ENCODE measurements at regions of chr3 and their contacts with region 1.

Region 1: DNA sequence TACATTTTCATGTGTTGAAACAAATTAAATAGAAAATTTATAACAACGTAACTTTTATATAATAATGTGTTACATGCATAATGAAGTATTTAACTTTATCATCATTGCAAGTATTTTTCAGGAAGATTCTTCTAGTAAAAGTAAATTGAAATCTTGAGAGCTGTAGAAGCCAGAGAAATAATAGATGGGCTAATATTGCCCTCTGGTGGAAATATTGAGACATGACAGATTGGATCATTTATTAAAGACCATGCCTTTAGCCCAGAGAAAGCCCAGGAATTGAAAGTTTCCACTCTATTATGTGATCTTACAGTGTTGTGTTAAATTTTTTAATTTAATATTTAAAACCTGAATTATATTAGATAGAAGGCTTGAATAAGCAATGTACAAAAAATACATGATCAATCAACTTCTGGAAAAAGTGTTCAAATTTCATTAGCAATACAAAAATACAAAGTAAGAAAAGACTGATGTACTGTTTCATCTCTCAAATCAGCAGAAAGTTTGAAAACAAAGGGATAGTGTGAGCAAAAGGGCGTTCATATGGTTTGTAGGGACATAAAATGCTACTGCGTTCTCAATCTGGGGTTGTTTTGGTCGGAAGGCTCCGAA is 52.7 kb upstream of the SPTSSB start:
- DNase-seq: peak; percentile 22
- H3K4me3 ChIP-seq: no peak overlapping the region
- H3K27ac ChIP-seq: no peak overlapping the region
- H3K4me1 ChIP-seq: peaks cover 14% of the 10 kb centered on the region
- H3K27me3 ChIP-seq: no peaks in the 10 kb centered on the region
- CTCF ChIP-seq: peak; percentile 49 to 55

Region 2: GRCh38 chr3:160921020-160921635 is 502.9 kb before region 1 on chr3:
- CTCF ChIA-PET with region 1: no interaction called
- dilution Hi-C with region 1: no loop called
- in situ Hi-C with region 1: loop called in 1 of 2 experiments (anchors 25 kb)
- intact Hi-C with region 1: loop called (anchors 2 kb)
- DNase-seq: peak; percentile 8
- H3K4me3 ChIP-seq: no peak overlapping the region
- H3K27ac ChIP-seq: no peak overlapping the region
- H3K4me1 ChIP-seq: no peaks in the 10 kb centered on the region
- H3K27me3 ChIP-seq: no peaks in the 10 kb centered on the region
- CTCF ChIP-seq: peak; percentile 67 to 79

Region 3: GRCh38 chr3:160956806-160957205 is 467.2 kb before region 1 on chr3:
- CTCF ChIA-PET with region 1: no interaction called
- dilution Hi-C with region 1: no loop called
- in situ Hi-C with region 1: loop called in 1 of 2 experiments (anchors 25 kb)
- intact Hi-C with region 1: loop called (anchors 1 kb)
- DNase-seq: peak; percentile 24
- H3K4me3 ChIP-seq: no peak overlapping the region
- H3K27ac ChIP-seq: no peak overlapping the region
- H3K4me1 ChIP-seq: no peaks in the 10 kb centered on the region
- H3K27me3 ChIP-seq: peaks cover 3% of the 10 kb centered on the region
- CTCF ChIP-seq: peak; percentile 43 to 54

Region 4: GRCh38 chr3:161220850-161221753 is 202.9 kb before region 1 on chr3 and contains the start of gene NMD3:
- CTCF ChIA-PET with region 1: no interaction called
- dilution Hi-C with region 1: no loop called
- in situ Hi-C with region 1: no loop called
- intact Hi-C with region 1: loop called (anchors 5 kb)
- DNase-seq: peak; percentile 91
- H3K4me3 ChIP-seq: peak within 1 kb of the TSS; percentile 93 to 97 (median 96)
- H3K27ac ChIP-seq: peak within 1 kb of the TSS; percentile 93
- H3K4me1 ChIP-seq: peaks cover 10% of the 10 kb centered on the region
- H3K27me3 ChIP-seq: no peaks in the 10 kb centered on the region
- CTCF ChIP-seq: no peak
- total RNA-seq, gene NMD3: 74.4 to 112 TPM

Region 5: GRCh38 chr3:161371430-161372326 is 52.3 kb before region 1 on chr3 and contains the start of gene SPTSSB:
- CTCF ChIA-PET with region 1: no interaction called
- dilution Hi-C with region 1: no loop called
- in situ Hi-C with region 1: no loop called
- intact Hi-C with region 1: no loop called
- DNase-seq: peak; percentile 72
- H3K4me3 ChIP-seq: peak within 1 kb of the TSS; percentile 54 to 61 (median 56)
- H3K27ac ChIP-seq: no peak within 1 kb of the TSS
- H3K4me1 ChIP-seq: peaks cover 16% of the 10 kb centered on the region
- H3K27me3 ChIP-seq: no peaks in the 10 kb centered on the region
- CTCF ChIP-seq: peak in 1 of 2 donors; percentile 26
- total RNA-seq, gene SPTSSB: 0.17 TPM in 1 of 2 donors, not detected in the other

Region 6: GRCh38 chr3:161540594-161540993 is 116.6 kb after region 1 on chr3:
- CTCF ChIA-PET with region 1: no interaction called
- dilution Hi-C with region 1: no loop called
- in situ Hi-C with region 1: no loop called
- intact Hi-C with region 1: no loop called
- DNase-seq: no peak
- H3K4me3 ChIP-seq: no peak overlapping the region
- H3K27ac ChIP-seq: no peak overlapping the region
- H3K4me1 ChIP-seq: no peaks in the 10 kb centered on the region
- H3K27me3 ChIP-seq: no peaks in the 10 kb centered on the region
- CTCF ChIP-seq: no peak

Region 7: GRCh38 chr3:161567577-161568361 is 143.8 kb after region 1 on chr3:
- CTCF ChIA-PET with region 1: no interaction called
- dilution Hi-C with region 1: no loop called
- in situ Hi-C with region 1: no loop called
- intact Hi-C with region 1: no loop called
- DNase-seq: no peak
- H3K4me3 ChIP-seq: no peak overlapping the region
- H3K27ac ChIP-seq: no peak overlapping the region
- H3K4me1 ChIP-seq: no peaks in the 10 kb centered on the region
- H3K27me3 ChIP-seq: peaks cover 2% of the 10 kb centered on the region
- CTCF ChIP-seq: no peak

Region 8: DNA sequence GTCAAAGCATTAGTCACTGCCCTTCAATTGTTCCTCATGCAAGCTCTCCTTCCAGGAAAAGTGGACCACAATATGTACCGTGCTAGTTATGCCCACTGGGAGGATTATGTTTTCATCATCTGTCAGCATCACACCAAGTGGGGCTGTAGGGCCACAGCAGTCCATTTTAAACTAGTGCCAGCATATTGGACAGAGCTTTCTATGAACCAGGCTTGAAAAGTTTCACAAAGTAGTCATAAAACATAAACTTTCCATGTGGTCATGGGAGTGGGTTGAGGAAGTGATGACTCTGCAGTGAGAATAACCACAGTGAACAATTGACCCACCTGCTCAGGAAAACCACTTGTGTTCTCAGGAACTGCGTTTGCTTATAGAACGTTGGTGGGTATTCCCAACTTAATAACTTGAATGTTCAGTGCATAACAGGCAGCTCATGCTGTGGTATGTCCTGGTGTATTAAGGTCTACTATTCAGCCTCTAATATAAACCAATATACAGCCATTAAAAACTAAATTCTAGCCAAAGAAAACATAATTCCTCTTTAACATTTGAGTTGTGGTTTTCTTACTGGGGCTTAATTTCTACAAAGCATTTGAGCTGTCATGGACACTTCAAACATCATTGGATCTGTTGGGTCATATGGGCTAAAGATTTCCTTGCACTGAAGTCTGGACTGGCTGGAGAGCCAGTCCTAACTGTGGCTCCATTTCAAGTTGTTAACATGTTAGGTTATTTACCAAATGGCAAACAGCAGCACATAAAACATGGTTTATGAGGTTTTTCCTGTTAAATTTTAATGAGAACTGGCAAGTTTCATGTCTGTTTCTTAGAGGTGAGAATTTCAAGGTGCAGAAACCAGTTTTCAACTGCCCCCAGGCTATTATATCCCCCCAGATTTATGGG is 346.7 kb after region 1 on chr3:
- CTCF ChIA-PET with region 1: no interaction called
- dilution Hi-C with region 1: no loop called
- in situ Hi-C with region 1: no loop called
- intact Hi-C with region 1: no loop called
- DNase-seq: no peak
- H3K4me3 ChIP-seq: no peak overlapping the region
- H3K27ac ChIP-seq: no peak overlapping the region
- H3K4me1 ChIP-seq: no peaks in the 10 kb centered on the region
- H3K27me3 ChIP-seq: no peaks in the 10 kb centered on the region
- CTCF ChIP-seq: no peak

Measured in mammary epithelial cell (primary cell).